ENCODE measurements at regions of chr6 and their contacts with region 1.

Region 1: GRCh38 chr6:33014841-33015634 is 5.6 kb upstream of the HLA-DOA start:
- DNase-seq: peak; percentile 45
- H3K4me3 Mint-ChIP-seq: no peak overlapping the region
- H3K27ac Mint-ChIP-seq: no peak overlapping the region
- H3K4me1 Mint-ChIP-seq: peaks cover 22% of the 10 kb centered on the region
- H3K27me3 Mint-ChIP-seq: peaks cover 46% of the 10 kb centered on the region

Region 2: DNA sequence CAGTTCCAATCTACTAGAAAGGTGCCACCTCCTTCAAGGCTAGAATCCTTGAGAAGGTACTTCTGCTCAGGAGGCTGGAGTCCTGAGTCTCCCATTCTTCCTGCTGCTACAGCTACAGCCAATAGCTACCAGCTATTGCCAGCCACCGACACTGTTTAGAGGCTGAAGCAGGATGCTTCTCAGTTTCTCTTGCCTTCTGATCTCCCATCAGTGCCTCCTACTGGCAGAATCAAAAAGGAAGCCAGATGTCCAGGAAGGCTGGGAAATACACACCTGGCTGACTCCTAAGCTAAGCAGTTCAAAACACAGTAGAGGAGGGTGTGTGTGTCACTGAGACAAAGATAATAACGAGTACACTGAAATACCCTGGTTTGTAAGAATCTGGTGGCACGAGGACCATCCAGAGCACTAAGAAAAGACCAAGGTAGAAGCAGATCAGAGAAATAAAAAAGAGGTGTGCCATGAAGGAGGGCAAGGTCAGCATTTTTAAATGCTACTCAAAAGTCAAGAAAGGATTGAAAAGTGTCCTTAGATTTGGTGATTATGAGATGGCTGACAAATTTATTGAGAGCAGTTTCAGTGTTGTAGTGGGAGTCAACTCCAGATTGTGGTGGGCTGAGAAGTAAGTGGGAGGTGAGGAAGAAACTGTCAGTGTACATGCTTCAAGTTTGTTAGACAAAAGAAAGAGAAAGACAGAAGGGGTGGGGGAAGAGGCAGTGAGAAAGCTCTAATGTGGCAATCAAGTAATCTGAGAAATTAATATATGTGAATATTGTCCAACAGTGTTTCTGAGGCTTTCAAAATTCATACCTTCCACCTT is 59.8 kb before region 1 on chr6:
- CTCF ChIA-PET with region 1: no interaction called
- POLR2A ChIA-PET with region 1: no interaction called
- DNase-seq: peak; percentile 45
- H3K4me3 Mint-ChIP-seq: no peak overlapping the region
- H3K27ac Mint-ChIP-seq: no peak overlapping the region
- H3K4me1 Mint-ChIP-seq: peaks cover 38% of the 10 kb centered on the region
- H3K27me3 Mint-ChIP-seq: no peaks in the 10 kb centered on the region

Region 3: DNA sequence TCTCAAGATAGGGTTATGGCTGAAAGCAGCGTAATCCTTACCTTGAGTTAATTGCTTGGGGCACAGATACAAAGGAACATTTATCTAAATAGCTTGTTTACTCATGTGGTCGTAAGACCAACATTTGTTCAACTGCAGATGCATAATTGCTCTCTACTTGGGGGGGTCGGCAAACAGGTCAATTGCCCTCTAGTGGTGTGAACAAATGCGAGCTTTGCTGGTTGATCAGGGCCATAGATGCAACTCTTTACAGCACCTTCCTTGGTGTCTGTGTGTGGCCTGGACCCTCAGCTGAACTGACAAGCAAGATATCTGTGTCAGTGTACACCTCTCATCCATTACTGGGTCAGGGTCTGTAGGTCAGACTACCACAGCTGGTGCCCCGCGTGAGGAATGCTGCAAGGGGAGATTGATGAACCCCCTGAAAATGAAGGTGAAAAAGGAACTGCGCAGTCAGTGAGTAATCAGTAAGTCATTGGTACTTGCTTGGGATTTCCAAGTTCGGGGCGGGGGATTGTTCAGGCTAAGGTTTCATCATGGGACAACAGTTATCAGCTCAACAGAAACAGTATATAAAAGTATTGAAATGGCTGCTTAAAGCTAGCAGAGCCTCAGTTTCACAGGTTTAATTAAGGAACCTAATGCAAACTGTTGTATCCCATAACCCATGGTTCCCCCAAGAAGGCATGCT is 34.4 kb after region 1 on chr6:
- CTCF ChIA-PET with region 1: interaction called, 17 read pairs
- POLR2A ChIA-PET with region 1: no interaction called
- DNase-seq: no peak
- H3K4me3 Mint-ChIP-seq: no peak overlapping the region
- H3K27ac Mint-ChIP-seq: no peak overlapping the region
- H3K4me1 Mint-ChIP-seq: no peaks in the 10 kb centered on the region
- H3K27me3 Mint-ChIP-seq: peaks cover 55% of the 10 kb centered on the region

Region 4: DNA sequence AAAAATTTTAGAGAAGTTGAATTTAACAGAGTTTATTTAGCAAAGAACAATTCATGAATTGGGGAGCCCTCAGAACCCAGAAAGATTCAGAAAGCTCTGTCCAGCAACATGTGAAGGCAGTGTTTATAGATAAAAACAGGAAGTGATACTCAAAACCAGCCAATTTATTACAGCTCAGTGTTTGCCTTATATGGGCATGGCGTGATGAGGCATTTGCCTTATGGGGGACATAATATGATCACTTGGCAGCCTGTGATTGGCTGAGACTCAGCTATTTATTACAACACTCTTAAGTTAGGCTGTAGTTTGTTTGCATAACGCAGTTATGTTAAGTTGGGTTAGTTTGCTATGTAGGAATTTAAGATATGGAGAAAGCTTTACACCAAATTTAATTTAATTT is 46.9 kb after region 1 on chr6:
- CTCF ChIA-PET with region 1: no interaction called
- POLR2A ChIA-PET with region 1: no interaction called
- DNase-seq: no peak
- H3K4me3 Mint-ChIP-seq: no peak overlapping the region
- H3K27ac Mint-ChIP-seq: no peak overlapping the region
- H3K4me1 Mint-ChIP-seq: no peaks in the 10 kb centered on the region
- H3K27me3 Mint-ChIP-seq: peaks cover 17% of the 10 kb centered on the region

Region 5: DNA sequence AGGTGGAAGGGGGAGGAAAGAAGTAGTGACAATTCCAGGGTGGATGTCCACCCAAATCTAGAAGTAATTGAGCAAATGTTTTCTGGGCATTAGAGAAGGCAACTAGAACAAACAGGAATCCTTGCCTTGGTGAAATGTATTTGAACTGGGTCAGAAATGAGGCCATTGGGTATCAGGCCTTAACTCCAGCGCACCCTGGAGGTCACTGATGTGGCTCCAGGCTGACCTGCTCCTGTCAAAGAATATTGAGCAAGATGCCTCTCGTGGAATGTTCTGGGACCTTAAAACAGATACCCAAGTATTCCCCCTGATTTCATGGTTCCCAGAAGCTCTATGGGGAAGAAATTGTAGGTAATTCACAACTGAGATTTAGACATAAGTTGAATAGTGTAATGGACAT is 67.7 kb after region 1 on chr6:
- CTCF ChIA-PET with region 1: interaction called, 60 read pairs
- POLR2A ChIA-PET with region 1: interaction called, 6 read pairs
- DNase-seq: no peak
- H3K4me3 Mint-ChIP-seq: no peak overlapping the region
- H3K27ac Mint-ChIP-seq: peak overlapping the region; percentile 23
- H3K4me1 Mint-ChIP-seq: peaks cover 38% of the 10 kb centered on the region
- H3K27me3 Mint-ChIP-seq: no peaks in the 10 kb centered on the region

Region 6: DNA sequence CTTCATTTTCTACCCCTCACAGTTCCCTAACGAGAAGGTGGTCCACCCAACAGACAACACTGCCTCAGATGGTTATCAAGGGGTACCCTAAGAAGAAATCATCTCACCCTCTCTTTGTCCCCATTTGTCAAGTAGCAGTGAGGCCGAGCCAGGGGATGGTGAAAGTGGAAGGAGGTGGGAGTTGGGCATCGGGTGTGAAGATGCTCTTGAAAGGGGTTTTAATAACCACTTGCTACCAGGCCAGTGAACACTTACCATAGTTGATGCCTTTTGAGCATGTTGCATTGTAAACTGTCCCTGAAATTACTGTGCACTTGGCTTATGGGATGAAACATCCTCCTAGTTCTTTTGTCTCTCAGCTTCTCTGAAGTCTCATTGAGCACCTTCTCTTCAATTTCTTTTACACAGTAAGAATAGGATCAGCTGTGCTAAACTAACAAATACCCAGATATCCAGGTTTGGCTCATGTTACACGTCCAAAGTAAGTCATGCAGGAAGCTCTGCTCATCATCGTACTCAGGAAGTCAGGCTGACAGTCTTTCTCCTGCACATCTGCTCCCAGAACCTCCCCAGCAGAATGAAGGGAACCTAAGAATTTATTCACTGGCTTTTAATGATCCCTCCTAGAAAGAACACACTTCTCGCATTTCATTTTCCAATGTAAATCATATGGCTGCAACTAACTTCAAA is 74.0 kb after region 1 on chr6:
- CTCF ChIA-PET with region 1: interaction called, 60 read pairs
- POLR2A ChIA-PET with region 1: no interaction called
- DNase-seq: no peak
- H3K4me3 Mint-ChIP-seq: no peak overlapping the region
- H3K27ac Mint-ChIP-seq: no peak overlapping the region
- H3K4me1 Mint-ChIP-seq: no peaks in the 10 kb centered on the region
- H3K27me3 Mint-ChIP-seq: peaks cover 10% of the 10 kb centered on the region

Measured in activated CD4-positive, alpha-beta memory T cell treated with anti-CD3 and anti-CD28 coated beads, Interleukin-2, amount 10 ng/mL, durations not matched to agents 7 days and 5 days (primary cell).